Mammary epithelial cell (primary cell): ENCODE measurements at regions of chr6 and their contacts with region 1.

Region 1: DNA sequence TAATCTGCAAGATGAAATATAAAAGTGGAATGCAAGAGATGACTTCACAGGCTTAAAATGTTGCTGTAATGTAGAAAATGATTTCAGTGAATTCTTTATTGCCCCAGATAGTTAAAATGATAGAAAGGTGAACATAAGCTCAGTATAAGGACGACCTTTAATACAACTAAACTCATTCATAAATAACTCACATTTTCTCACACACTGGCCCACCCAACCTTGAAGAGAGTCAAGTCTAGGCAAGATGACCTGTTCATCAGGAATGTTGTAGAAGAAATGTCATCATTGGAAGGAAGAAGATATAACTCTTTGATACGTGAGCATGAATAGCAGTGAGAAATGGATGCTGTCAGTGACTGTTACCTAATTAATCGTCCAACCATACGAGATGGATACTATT is 111.1 kb upstream of the SASH1 start:
- DNase-seq: peak; percentile 73
- H3K4me3 ChIP-seq: no peak overlapping the region
- H3K27ac ChIP-seq: peak overlapping the region; percentile 10
- H3K4me1 ChIP-seq: peaks cover 26% of the 10 kb centered on the region
- H3K27me3 ChIP-seq: no peaks in the 10 kb centered on the region
- CTCF ChIP-seq: no peak

Region 2: GRCh38 chr6:148192310-148192709 is 39.3 kb before region 1 on chr6:
- CTCF ChIA-PET with region 1: interaction called, 4 read pairs
- dilution Hi-C with region 1: no loop called
- in situ Hi-C with region 1: loop called in 1 of 2 experiments (anchors 10 kb)
- intact Hi-C with region 1: loop called (anchors 1 kb)
- DNase-seq: peak; percentile 86
- H3K4me3 ChIP-seq: peak overlapping the region in 1 of 3 experiments; percentile 6
- H3K27ac ChIP-seq: peak overlapping the region; percentile 89
- H3K4me1 ChIP-seq: peaks cover 40% of the 10 kb centered on the region
- H3K27me3 ChIP-seq: no peaks in the 10 kb centered on the region
- CTCF ChIP-seq: no peak

Region 3: GRCh38 chr6:148479497-148479896 is 247.9 kb after region 1 on chr6:
- CTCF ChIA-PET with region 1: interaction called, 10 read pairs
- dilution Hi-C with region 1: no loop called
- in situ Hi-C with region 1: no loop called
- intact Hi-C with region 1: no loop called
- DNase-seq: no peak
- H3K4me3 ChIP-seq: no peak overlapping the region
- H3K27ac ChIP-seq: no peak overlapping the region
- H3K4me1 ChIP-seq: no peaks in the 10 kb centered on the region
- H3K27me3 ChIP-seq: no peaks in the 10 kb centered on the region
- CTCF ChIP-seq: no peak

Region 4: GRCh38 chr6:148538261-148539190 is 307.0 kb after region 1 on chr6:
- CTCF ChIA-PET with region 1: no interaction called
- dilution Hi-C with region 1: no loop called
- in situ Hi-C with region 1: no loop called
- intact Hi-C with region 1: no loop called
- DNase-seq: no peak
- H3K4me3 ChIP-seq: no peak overlapping the region
- H3K27ac ChIP-seq: no peak overlapping the region
- H3K4me1 ChIP-seq: no peaks in the 10 kb centered on the region
- H3K27me3 ChIP-seq: no peaks in the 10 kb centered on the region
- CTCF ChIP-seq: no peak